Ascending aorta (tissue), 2 donors: ENCODE measurements at regions of chr9 and their contacts with region 1.

Region 1: DNA sequence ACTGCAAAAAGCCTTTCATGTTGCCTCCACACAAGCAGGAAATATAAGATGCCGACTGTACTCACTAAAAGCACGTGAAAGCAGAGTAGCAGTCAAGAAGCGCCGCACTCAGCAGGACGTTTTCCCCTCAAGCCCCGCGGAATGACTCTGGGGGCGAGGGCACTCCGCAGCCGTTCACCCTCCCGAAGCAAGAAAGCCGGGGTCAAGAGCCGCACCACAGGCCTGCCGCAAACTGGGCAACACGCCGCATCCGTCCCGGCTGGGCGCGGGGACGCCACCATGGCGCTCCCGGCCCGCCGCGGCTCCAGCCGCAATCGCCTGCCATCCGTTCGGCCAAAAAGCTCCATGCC is 364 bp downstream of the RPS6 start:
- DNase-seq: no peak
- H3K4me3 ChIP-seq: peak overlapping the region; percentile 69 to 73
- H3K27ac ChIP-seq: peak overlapping the region; percentile 88 to 91
- H3K4me1 ChIP-seq: peaks cover 0 to 24% of the 10 kb centered on the region in 2 donors
- H3K27me3 ChIP-seq: no peaks in the 10 kb centered on the region
- CTCF ChIP-seq: no peak

Region 2: GRCh38 chr9:19102631-19103345 is 276.9 kb before region 1 on chr9 and contains the start of gene HAUS6:
- intact Hi-C with region 1: loop called (anchors 10 kb)
- DNase-seq: peak; percentile 83 to 99
- H3K4me3 ChIP-seq: peak within 1 kb of the TSS; percentile 67 to 74
- H3K27ac ChIP-seq: peak within 1 kb of the TSS; percentile 85 to 87
- H3K4me1 ChIP-seq: peaks cover 10 to 11% of the 10 kb centered on the region in 2 donors
- H3K27me3 ChIP-seq: no peaks in the 10 kb centered on the region
- CTCF ChIP-seq: peak in 2 of 3 experiments; percentile 41 to 69
- total RNA-seq, gene HAUS6: 3.4 TPM

Region 3: DNA sequence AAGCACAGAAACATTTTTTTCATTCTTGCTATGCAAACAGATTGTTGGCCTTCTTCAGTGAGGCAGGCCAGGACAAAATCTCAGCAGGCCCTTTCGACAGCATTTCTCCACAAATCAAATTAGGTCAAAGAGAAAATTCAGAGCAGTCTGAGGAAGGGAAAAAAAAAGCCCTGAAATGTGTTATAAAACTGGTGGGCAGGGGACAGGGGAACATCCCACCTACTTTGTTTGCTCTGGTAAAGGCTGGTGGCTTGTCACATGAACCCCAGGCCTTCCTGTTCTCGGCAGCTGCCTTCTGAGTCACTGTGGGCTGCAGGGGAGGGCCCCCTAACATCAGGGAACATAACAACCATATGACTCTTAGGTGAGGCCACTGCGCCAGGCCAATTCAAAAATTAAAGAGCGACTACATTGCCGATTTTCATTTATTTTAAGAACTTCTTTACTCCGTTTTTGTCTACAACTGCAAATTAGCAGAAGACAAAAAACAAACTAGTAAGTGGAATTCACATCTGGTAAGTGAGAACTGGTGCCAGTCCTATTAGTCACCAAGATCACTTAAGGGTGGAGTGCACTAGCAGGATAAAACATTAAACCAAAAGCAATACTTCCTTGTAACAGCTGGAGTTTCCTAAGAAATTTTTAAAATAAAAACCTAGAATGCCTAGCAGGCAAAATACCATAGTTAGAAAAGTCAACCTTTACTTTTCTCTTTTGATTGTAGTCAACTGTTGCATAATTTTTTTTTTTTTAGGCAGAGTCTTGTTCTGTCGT is 195.3 kb before region 1 on chr9:
- intact Hi-C with region 1: loop called (anchors 1 kb)
- DNase-seq: peak; percentile 90 to 96
- H3K4me3 ChIP-seq: peak overlapping the region in 1 of 2 donors; percentile 10
- H3K27ac ChIP-seq: peak overlapping the region; percentile 93 to 96
- H3K4me1 ChIP-seq: peaks cover 10 to 18% of the 10 kb centered on the region in 2 donors
- H3K27me3 ChIP-seq: no peaks in the 10 kb centered on the region
- CTCF ChIP-seq: no peak

Region 4: GRCh38 chr9:19408693-19409400 is 29.2 kb after region 1 on chr9 and contains the start of gene ACER2:
- intact Hi-C with region 1: loop called (anchors 1 kb)
- DNase-seq: peak; percentile 79 to 97
- H3K4me3 ChIP-seq: peak within 1 kb of the TSS; percentile 92 to 94
- H3K27ac ChIP-seq: peak within 1 kb of the TSS; percentile 88 to 89
- H3K4me1 ChIP-seq: peaks cover 0 to 12% of the 10 kb centered on the region in 2 donors
- H3K27me3 ChIP-seq: no peaks in the 10 kb centered on the region
- CTCF ChIP-seq: peak in 2 of 3 experiments; percentile 4 to 18
- total RNA-seq, gene ACER2: 1.4 TPM

Region 5: GRCh38 chr9:19451240-19452087 is 71.8 kb after region 1 on chr9:
- intact Hi-C with region 1: no loop called
- DNase-seq: peak in 1 of 2 donors; percentile 1
- H3K4me3 ChIP-seq: no peak overlapping the region
- H3K27ac ChIP-seq: no peak overlapping the region
- H3K4me1 ChIP-seq: no peaks in the 10 kb centered on the region
- H3K27me3 ChIP-seq: no peaks in the 10 kb centered on the region
- CTCF ChIP-seq: no peak